Activated CD4-positive, alpha-beta T cell treated with anti-CD3 and anti-CD28 coated beads for 36 hours (primary cell): ENCODE measurements at regions of chr12 and their contacts with region 1.

Region 1: DNA sequence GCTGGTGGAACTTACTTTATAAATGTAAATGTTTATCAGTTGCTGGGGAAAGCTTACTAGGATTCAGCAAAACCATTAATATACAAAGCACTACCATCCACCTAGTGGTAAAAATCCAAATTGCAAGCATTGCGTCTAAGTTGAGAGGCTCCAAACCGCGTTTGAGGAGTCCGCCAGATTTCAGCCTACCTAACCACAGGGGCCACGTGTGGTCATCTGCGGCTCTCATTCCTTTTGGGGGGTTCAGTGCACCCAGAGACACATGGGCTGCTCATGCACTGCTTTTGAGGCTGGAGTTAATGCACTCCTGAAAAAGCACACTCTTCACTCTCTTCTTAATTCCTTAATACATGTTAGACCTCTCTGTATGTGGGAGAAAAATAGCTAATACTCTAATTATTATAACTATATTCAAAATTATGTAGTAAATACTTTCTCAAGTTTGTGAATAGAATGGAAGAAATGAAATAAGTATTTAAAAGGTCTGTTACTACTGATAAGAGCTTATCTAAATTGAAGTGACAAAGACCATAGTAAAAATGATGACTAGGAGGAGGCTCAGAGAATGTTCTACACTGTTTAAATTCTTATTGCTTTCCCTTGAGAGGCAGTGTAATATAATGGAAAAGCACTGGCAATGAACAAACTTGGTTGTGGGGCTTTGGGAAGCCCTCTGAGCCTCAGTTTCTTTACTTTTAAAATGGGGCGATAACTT is 41.4 kb upstream of the MANSC4 start:
- DNase-seq: peak; percentile 38
- ATAC-seq: no peak
- H3K4me3 Mint-ChIP-seq: no peak overlapping the region
- H3K27ac Mint-ChIP-seq: no peak overlapping the region
- H3K4me1 Mint-ChIP-seq: peaks cover 33% of the 10 kb centered on the region
- H3K27me3 Mint-ChIP-seq: peaks cover 49% of the 10 kb centered on the region

Region 2: DNA sequence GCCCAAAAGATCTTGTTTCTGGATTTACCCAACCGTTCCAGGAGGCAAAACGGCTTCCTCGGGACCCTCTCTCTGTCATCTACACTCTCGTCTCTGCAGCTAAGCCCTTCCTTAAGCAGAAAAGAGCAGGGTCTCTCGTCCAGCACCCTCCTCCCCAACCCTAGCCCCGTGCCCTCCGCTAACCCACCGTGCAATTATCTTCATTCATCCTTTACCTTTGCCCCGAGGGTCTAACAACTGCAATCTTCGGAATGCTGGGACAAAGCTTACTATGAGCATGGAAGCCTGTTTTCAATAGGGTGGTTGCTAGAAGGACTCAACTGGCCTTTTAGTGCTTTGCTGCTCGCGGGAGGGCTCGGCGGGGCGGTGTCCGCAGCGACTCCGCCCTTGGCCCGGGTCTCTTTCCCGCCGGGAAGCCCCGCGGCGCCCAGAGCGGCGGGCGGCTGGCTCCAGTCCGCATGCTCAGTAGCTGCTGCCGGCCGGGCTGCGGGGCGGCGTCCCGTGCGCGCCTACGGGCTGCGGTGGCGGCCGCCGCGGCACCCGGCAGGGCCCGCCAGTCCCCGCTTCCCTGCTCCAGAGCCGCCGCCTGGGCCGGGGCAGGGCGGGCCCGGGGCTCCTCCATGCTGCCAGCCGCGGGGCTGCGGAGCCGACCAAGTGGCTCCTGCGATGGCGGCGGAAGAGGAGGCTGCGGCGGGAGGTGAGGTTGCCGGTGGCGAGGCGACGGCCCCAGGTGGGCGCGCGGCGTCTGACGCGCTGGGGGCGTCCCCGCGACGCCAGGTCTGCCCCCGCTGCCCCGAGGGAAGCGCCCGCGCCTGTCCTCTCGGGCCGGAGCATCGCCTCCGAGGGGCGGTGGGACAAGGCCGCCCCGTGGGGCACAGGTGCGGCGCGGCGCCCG is 488.8 kb before region 1 on chr12 and contains the start of gene BMAL2:
- CTCF ChIA-PET with region 1: no interaction called
- POLR2A ChIA-PET with region 1: no interaction called
- intact Hi-C with region 1: loop called in 1 of 2 experiments (anchors 1 kb)
- DNase-seq: peak; percentile 66
- ATAC-seq: peak; percentile 28
- H3K4me3 Mint-ChIP-seq: peak within 1 kb of the TSS; percentile 82
- H3K27ac Mint-ChIP-seq: peak within 1 kb of the TSS; percentile 90
- H3K4me1 Mint-ChIP-seq: peaks cover 42% of the 10 kb centered on the region
- H3K27me3 Mint-ChIP-seq: peaks cover 30% of the 10 kb centered on the region
- total RNA-seq, gene BMAL2: 10.9 to 13.2 TPM

Region 3: GRCh38 chr12:27710592-27711316 is 110.7 kb before region 1 on chr12 and contains the start of gene MRPS35:
- CTCF ChIA-PET with region 1: no interaction called
- POLR2A ChIA-PET with region 1: interaction called, 5 read pairs
- intact Hi-C with region 1: loop called (anchors 1 to 2 kb)
- DNase-seq: peak; percentile 95
- ATAC-seq: peak; percentile 98
- H3K4me3 Mint-ChIP-seq: peak within 1 kb of the TSS; percentile 94
- H3K27ac Mint-ChIP-seq: peak within 1 kb of the TSS; percentile 94
- H3K4me1 Mint-ChIP-seq: peaks cover 28% of the 10 kb centered on the region
- H3K27me3 Mint-ChIP-seq: no peaks in the 10 kb centered on the region
- total RNA-seq, gene MRPS35: 58.5 to 62.1 TPM

Region 4: DNA sequence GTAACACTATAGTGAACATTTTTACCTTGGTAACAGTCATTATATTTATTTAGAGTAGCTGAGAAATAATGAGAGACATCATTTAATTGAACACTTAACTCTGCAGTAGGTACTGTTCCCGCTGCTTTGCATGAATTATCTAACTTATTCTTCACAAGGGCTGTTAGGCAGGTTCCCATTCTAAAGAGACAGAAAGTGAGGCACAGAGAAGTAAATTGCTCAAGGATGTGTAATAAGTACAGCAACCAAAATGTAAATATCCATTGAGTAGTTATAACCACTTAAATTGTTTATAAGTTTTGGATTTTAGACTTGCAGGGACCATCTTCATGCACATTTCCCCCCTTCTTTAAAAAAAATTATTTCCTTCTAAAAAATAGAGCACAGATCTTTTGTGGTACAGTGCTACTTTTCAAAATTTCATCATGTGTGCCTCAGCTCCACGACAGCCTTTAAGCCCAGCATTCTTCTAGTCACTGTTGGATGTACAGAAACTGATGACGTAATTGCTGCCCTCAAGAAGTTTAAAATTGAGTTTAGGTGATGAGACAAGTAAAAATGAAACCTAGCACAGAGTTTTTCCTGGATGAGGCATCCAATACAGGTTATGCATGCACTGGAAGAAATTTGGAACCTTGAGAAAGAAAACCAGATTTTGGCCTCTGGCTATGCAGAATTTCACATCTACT is 35.4 kb before region 1 on chr12:
- CTCF ChIA-PET with region 1: interaction called, 20 read pairs
- POLR2A ChIA-PET with region 1: interaction called, 5 read pairs
- intact Hi-C with region 1: no loop called
- DNase-seq: no peak
- ATAC-seq: peak; percentile 82
- H3K4me3 Mint-ChIP-seq: no peak overlapping the region
- H3K27ac Mint-ChIP-seq: no peak overlapping the region
- H3K4me1 Mint-ChIP-seq: peaks cover 40% of the 10 kb centered on the region
- H3K27me3 Mint-ChIP-seq: no peaks in the 10 kb centered on the region

Region 5: DNA sequence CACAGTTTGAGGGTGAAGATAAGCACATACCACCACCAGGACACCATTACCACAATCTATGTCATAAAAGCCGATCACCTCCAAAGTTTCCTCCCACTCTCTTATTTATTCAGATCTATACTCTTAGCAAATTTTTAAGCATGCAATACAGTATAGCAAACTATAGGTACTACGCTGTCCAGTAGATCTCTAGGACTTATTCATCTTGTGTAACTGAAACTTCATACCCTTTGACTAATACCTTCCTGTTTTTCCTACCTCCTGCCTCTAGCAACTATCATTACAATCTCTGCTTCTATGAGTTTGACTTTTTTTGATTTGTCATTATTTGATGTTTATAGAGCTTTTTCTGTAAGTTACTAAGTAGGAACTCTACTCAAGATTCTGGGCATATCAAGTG is 43.1 kb after region 1 on chr12:
- CTCF ChIA-PET with region 1: interaction called, 8 read pairs
- POLR2A ChIA-PET with region 1: interaction called, 3 read pairs
- intact Hi-C with region 1: loop called (anchors 1 kb)
- DNase-seq: no peak
- ATAC-seq: peak; percentile 91
- H3K4me3 Mint-ChIP-seq: no peak overlapping the region
- H3K27ac Mint-ChIP-seq: no peak overlapping the region
- H3K4me1 Mint-ChIP-seq: peaks cover 15% of the 10 kb centered on the region
- H3K27me3 Mint-ChIP-seq: peaks cover 12% of the 10 kb centered on the region

Region 6: DNA sequence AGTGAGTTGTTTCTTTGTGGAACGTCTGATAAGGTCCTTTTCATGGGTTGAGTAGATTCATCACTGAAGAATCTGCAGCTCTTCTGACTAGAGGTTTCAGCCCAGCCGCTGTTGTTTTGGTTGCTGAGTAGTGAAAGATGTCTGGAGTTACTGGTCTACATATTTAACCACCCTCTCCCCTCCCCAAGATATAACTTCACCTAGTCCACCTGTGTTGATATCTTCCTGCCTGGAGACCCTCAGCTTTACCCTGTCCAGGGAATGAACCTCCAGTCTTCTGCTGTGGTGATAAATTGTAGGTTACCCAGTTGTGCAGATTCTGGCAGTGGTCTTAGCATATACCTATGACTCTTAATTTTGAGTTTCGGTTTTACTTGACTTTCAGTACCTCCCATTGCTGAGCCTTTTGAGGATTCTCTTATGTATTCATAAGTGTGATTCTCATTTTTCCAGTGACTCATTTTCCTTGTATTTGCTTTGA is 431.8 kb after region 1 on chr12:
- CTCF ChIA-PET with region 1: interaction called, 3 read pairs
- POLR2A ChIA-PET with region 1: no interaction called
- intact Hi-C with region 1: loop called (anchors 1 kb)
- DNase-seq: peak; percentile 72
- ATAC-seq: peak; percentile 95
- H3K4me3 Mint-ChIP-seq: peak overlapping the region; percentile 34
- H3K27ac Mint-ChIP-seq: peak overlapping the region; percentile 87
- H3K4me1 Mint-ChIP-seq: peaks cover 69% of the 10 kb centered on the region
- H3K27me3 Mint-ChIP-seq: no peaks in the 10 kb centered on the region

Region 7: DNA sequence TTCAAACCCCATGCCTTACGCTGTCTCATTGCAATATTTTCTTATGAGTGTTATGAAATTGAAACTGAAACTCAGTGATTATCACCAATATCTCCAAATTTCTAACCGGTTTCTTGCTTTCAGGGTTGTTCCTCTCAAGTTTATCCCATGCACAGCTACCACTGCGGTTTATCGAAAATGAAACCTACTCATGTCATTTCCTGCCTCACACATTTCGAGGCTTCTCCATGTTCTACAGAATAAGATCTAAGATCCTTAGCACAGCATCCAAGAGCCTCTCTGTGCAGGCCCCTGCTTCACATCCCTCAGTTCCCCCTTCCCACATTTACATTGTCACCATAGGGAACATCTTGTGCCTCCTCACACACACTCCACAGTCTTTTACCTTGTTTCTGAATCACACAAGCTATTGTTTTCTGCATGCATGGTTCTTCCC is 1282.1 kb after region 1 on chr12:
- CTCF ChIA-PET with region 1: no interaction called
- POLR2A ChIA-PET with region 1: interaction called, 3 read pairs
- intact Hi-C with region 1: loop called (anchors 1 kb)
- DNase-seq: peak; percentile 59
- ATAC-seq: peak; percentile 92
- H3K4me3 Mint-ChIP-seq: peak overlapping the region; percentile 11
- H3K27ac Mint-ChIP-seq: peak overlapping the region; percentile 28
- H3K4me1 Mint-ChIP-seq: peaks cover 34% of the 10 kb centered on the region
- H3K27me3 Mint-ChIP-seq: peaks cover 7% of the 10 kb centered on the region